ENCODE measurements at regions of chr12 and their contacts with region 1.

Region 1: GRCh38 chr12:120292661-120293531 is at the start of gene RNU4-1:
- DNase-seq: peak; percentile 81
- H3K4me3 Mint-ChIP-seq: no peak within 1 kb of the TSS
- H3K27ac Mint-ChIP-seq: no peak within 1 kb of the TSS
- H3K4me1 Mint-ChIP-seq: peaks cover 15% of the 10 kb centered on the region
- H3K27me3 Mint-ChIP-seq: no peaks in the 10 kb centered on the region
- CTCF ChIP-seq: no peak
- total RNA-seq, gene RNU4-1: 2,759 and 3,670 TPM in 2 replicates

Region 2: DNA sequence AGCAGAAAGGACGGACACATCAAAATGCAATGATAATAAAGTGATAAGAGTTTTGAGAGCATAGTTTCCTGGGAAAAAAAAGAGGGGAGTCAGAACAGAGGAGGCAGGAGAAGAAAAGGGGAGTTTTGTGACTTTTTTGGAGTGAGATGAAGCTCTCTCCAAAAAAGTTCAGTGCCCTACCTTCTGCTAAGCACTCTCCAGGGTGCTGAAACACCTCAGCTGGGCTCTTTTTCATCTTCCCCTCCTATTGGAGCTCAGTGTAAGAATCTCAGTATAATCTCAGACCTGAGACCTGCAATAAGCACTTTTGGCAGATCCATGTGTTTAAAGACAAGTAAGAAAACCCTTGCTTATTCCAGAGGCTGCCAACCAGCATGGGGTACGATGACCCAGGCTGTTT is 1370.5 kb before region 1 on chr12:
- CTCF ChIA-PET with region 1: no interaction called
- intact Hi-C with region 1: no loop called
- DNase-seq: no peak
- H3K4me3 Mint-ChIP-seq: no peak overlapping the region
- H3K27ac Mint-ChIP-seq: no peak overlapping the region
- H3K4me1 Mint-ChIP-seq: no peaks in the 10 kb centered on the region
- H3K27me3 Mint-ChIP-seq: no peaks in the 10 kb centered on the region
- CTCF ChIP-seq: no peak

Region 3: GRCh38 chr12:120116792-120117651 is 175.9 kb before region 1 on chr12:
- CTCF ChIA-PET with region 1: no interaction called
- intact Hi-C with region 1: loop called (anchors 5 kb)
- DNase-seq: peak; percentile 99
- H3K4me3 Mint-ChIP-seq: peak overlapping the region; percentile 98
- H3K27ac Mint-ChIP-seq: peak overlapping the region; percentile 95
- H3K4me1 Mint-ChIP-seq: peaks cover 51% of the 10 kb centered on the region
- H3K27me3 Mint-ChIP-seq: no peaks in the 10 kb centered on the region
- CTCF ChIP-seq: no peak

Region 4: GRCh38 chr12:120199595-120200306 is 93.1 kb before region 1 on chr12:
- CTCF ChIA-PET with region 1: interaction called, 14 read pairs
- intact Hi-C with region 1: no loop called
- DNase-seq: peak; percentile 30
- H3K4me3 Mint-ChIP-seq: peak overlapping the region; percentile 85
- H3K27ac Mint-ChIP-seq: peak overlapping the region; percentile 96
- H3K4me1 Mint-ChIP-seq: peaks cover 22% of the 10 kb centered on the region
- H3K27me3 Mint-ChIP-seq: no peaks in the 10 kb centered on the region
- CTCF ChIP-seq: no peak

Measured in Calu3 (cell line).